ENCODE measurements at regions of chr17 and their contacts with region 1.

Region 1: GRCh38 chr17:49997791-49998703 is 3.0 kb upstream of the DLX3 start:
- DNase-seq: peak; percentile 81
- ATAC-seq: peak; percentile 86
- H3K4me3 ChIP-seq: no peak overlapping the region
- H3K27ac ChIP-seq: no peak overlapping the region
- H3K4me1 ChIP-seq: peaks cover 23% of the 10 kb centered on the region
- H3K27me3 ChIP-seq: peaks cover 62% of the 10 kb centered on the region
- CTCF ChIP-seq: peak; percentile 97

Region 2: GRCh38 chr17:49567871-49568694 is 430.0 kb before region 1 on chr17:
- intact Hi-C with region 1: loop called (anchors 5 kb)
- DNase-seq: peak; percentile 95
- ATAC-seq: peak; percentile 86
- H3K4me3 ChIP-seq: peak overlapping the region; percentile 51
- H3K27ac ChIP-seq: peak overlapping the region; percentile 72
- H3K4me1 ChIP-seq: peaks cover 8% of the 10 kb centered on the region
- H3K27me3 ChIP-seq: no peaks in the 10 kb centered on the region
- CTCF ChIP-seq: peak; percentile 94

Region 3: DNA sequence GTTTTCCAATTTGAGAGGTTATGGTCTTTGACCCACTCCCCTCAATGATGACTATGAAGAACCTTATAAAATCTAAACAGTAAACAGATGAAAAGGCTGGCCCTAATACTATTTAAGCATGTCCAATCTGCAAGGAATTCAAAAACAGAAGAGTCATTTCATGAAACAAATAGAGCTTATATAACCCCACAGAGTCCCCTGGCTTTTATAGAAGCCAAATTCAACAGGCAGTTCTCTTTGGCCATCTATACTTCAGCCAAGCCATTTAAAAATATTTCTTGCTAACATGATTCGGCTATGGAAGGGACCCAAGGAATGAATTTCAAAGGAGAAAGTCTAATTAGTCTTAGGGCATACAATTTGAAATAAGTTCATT is 363.6 kb before region 1 on chr17:
- intact Hi-C with region 1: no loop called
- DNase-seq: no peak
- ATAC-seq: no peak
- H3K4me3 ChIP-seq: no peak overlapping the region
- H3K27ac ChIP-seq: peak overlapping the region; percentile 11
- H3K4me1 ChIP-seq: peaks cover 51% of the 10 kb centered on the region
- H3K27me3 ChIP-seq: no peaks in the 10 kb centered on the region
- CTCF ChIP-seq: no peak

Region 4: GRCh38 chr17:49809056-49809455 is 189.0 kb before region 1 on chr17:
- intact Hi-C with region 1: no loop called
- DNase-seq: no peak
- ATAC-seq: no peak
- H3K4me3 ChIP-seq: no peak overlapping the region
- H3K27ac ChIP-seq: no peak overlapping the region
- H3K4me1 ChIP-seq: no peaks in the 10 kb centered on the region
- H3K27me3 ChIP-seq: no peaks in the 10 kb centered on the region
- CTCF ChIP-seq: no peak

Region 5: GRCh38 chr17:49861150-49861892 is 136.7 kb before region 1 on chr17:
- intact Hi-C with region 1: loop called (anchors 2 kb)
- DNase-seq: no peak
- ATAC-seq: peak; percentile 68
- H3K4me3 ChIP-seq: no peak overlapping the region
- H3K27ac ChIP-seq: no peak overlapping the region
- H3K4me1 ChIP-seq: no peaks in the 10 kb centered on the region
- H3K27me3 ChIP-seq: peaks cover 6% of the 10 kb centered on the region
- CTCF ChIP-seq: peak; percentile 85

Region 6: DNA sequence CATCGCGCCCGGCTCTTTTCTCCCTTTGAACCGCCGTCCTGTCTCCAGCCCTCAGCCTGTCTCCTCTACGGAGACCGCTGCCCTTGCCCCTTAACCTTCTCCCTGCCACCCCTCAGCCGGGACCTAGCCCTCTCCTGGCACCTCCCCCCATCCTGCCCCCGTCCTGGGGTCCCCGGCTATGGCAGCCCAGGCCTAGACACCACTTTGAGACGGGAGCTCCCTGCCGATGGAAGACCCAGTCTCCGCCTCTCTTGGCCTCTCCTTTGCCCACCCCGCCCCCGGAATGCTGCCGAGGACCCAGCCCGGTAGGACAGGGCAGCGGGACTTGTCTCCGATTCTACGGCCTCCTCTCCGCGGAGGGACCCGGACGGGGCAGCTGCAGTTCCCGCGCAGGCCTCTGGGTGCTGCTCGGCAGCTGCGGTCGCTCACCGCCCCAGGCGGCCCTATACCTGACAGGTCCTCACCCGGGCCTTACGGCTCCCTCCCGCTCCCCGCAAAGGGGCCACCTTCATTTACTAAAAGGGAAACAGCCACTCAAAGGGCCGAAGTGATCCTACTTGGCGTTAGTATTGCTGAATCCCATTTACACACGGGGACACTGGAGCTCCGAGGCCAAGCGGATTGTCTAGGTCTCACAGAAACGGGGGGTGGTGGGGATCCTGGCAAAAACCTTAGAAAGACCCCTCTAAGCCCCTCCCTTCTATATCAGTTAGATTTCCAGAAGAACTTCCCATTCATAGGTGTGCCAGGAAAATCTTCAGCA is 117.6 kb before region 1 on chr17:
- intact Hi-C with region 1: loop called (anchors 5 kb)
- DNase-seq: peak; percentile 91
- ATAC-seq: peak; percentile 96
- H3K4me3 ChIP-seq: no peak overlapping the region
- H3K27ac ChIP-seq: no peak overlapping the region
- H3K4me1 ChIP-seq: peaks cover 7% of the 10 kb centered on the region
- H3K27me3 ChIP-seq: peaks cover 33% of the 10 kb centered on the region
- CTCF ChIP-seq: peak; percentile 99

Region 7: DNA sequence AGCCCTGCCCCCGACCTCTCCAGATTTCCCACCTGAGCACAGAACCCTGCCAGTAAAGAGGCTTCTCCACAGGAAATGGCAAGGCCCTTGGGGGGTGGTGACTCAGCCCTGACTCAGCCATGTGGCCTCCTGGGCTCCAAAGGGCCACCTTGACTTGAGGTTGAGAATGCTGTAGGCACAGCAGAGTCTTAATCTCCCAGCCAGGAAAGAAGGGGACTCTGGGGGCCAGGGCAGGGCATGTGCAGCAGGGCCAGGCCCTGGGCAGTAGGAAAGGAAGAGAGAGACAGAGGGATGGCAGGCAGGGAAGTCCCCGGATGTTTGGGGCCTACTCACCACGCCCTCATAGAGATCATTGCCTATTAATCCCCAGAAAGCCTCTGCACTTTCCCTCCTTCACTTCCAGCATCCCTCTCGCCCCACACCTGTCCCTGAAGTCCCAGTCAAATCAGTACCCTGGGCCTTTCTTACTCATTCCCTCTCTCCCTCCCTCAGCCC is 53.1 kb after region 1 on chr17:
- intact Hi-C with region 1: no loop called
- DNase-seq: no peak
- ATAC-seq: no peak
- H3K4me3 ChIP-seq: no peak overlapping the region
- H3K27ac ChIP-seq: peak overlapping the region; percentile 18
- H3K4me1 ChIP-seq: peaks cover 47% of the 10 kb centered on the region
- H3K27me3 ChIP-seq: no peaks in the 10 kb centered on the region
- CTCF ChIP-seq: no peak